Mammary epithelial cell (primary cell): ENCODE measurements at regions of chr2 and their contacts with region 1.

Region 1: DNA sequence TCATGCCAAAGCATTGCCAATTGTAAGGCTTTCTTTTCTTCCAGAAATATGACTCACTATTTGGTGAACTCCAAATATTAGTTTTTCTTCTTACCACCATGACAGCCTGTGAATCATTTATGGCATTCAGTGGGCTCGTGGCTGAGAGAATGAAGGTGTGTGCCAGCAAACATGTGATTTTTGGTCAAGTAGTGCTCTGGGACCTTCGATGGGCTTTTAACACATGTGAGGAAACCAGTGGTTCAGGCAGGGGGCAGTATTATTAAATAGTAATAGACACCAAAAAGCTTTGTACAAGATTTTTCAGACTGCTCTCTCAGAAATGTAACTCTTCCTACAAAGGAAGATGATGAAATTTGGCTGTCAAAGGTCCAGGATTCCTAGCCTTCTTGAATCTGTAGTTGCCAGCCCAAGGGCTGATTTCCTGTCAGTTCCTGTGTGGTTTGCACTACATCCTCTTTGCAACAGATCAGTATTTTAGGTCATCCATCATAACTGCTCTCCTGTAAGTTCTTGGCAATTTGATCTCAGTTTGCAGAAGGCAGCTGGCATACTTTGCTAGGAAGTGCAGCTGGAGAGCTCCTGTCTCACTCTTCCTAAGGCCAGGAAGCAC is 64.3 kb downstream of the BABAM2 start:
- DNase-seq: peak; percentile 92
- H3K4me3 ChIP-seq: peak overlapping the region in 1 of 3 experiments; percentile 4
- H3K27ac ChIP-seq: peak overlapping the region; percentile 84
- H3K4me1 ChIP-seq: peaks cover 66% of the 10 kb centered on the region
- H3K27me3 ChIP-seq: no peaks in the 10 kb centered on the region
- CTCF ChIP-seq: peak; percentile 3 to 33

Region 2: GRCh38 chr2:27754138-27754588 is 200.7 kb before region 1 on chr2:
- CTCF ChIA-PET with region 1: no interaction called
- dilution Hi-C with region 1: no loop called
- in situ Hi-C with region 1: no loop called
- intact Hi-C with region 1: loop called (anchors 2 kb)
- DNase-seq: peak; percentile 76
- H3K4me3 ChIP-seq: no peak overlapping the region
- H3K27ac ChIP-seq: peak overlapping the region; percentile 91
- H3K4me1 ChIP-seq: peaks cover 21% of the 10 kb centered on the region
- H3K27me3 ChIP-seq: no peaks in the 10 kb centered on the region
- CTCF ChIP-seq: peak; percentile 97 to 99

Region 3: DNA sequence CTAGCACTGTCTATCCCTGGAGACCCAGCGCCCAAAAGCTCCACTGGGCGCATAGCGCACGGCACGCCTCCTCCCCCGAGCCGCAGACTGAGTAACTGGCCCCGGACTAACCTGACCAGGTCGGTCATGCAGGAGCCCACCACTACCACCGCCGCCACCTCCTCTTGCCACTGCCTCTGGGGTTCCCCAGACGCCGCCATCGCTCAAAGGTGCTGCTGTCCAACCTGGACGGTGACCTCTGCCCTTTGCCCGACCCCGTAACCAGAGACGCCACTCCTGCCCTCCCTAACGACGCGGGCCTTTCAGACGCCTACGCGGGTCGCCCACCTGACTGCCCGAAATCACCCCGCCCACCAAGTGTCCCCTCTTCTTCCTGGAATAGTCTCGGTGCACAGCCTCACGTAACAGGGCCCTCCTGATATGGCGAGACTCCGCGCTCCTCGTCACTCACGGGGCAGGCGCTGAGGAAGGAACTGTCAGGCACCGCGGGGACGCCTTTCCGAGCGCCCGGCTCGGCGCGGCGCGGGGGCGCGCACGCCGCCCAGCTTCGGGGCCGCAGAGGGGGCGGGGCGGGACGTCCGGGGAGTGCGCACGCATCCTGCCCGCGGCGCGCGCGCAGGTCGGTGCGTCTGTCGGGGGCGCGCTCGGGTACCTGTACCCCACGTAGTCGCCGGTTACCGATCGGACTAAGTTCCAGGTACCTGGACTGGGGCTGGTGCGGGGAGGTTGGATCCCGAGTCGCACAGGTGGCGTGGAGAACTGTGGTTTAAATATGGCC is 64.5 kb before region 1 on chr2 and contains the starts of genes BABAM2 and RBKS:
- CTCF ChIA-PET with region 1: no interaction called
- dilution Hi-C with region 1: no loop called
- in situ Hi-C with region 1: no loop called
- intact Hi-C with region 1: loop called (anchors 2 kb)
- DNase-seq: peak; percentile 84
- H3K4me3 ChIP-seq: peak within 1 kb of the TSS; percentile 60 to 76 (median 74)
- H3K27ac ChIP-seq: peak within 1 kb of the TSS; percentile 90
- H3K4me1 ChIP-seq: peaks cover 21% of the 10 kb centered on the region
- H3K27me3 ChIP-seq: no peaks in the 10 kb centered on the region
- CTCF ChIP-seq: no peak
- total RNA-seq, gene BABAM2: 27.9 to 35.0 TPM
- total RNA-seq, gene RBKS: 1.1 to 3.8 TPM

Region 4: DNA sequence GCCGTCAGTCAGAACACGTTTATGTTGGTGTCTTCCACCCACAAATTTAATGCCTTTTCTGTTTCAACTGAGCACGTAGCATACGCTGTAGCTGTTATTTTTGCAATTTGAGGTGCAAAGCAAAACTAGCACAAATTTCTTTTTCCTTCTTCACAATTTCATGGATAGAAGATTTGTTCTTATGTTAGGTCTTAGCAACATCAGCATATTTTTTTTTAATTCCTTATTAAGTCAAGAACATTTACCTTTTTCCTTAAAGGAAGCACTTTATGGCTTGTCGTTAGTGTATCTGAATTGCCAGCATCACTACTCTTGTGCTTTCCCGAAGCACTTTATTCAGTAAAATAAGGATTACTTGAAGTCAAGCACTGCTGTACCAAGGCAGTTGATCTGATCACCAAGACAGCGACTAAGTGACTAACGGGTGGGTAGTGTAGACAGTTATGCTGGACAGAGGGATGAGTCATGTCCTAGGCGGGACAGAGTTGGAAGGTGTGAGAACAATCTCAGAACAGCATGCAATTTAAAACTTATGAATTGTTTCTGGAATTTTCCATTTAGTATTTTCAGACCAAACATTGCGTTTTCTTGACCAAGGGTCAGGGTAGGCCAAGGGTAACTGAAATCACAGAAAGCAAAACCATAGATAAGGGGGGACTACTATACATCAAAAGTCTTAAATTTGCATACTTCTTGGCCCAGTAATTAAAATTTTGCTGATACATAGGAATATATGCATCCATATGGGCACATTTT is 51.0 kb before region 1 on chr2:
- CTCF ChIA-PET with region 1: no interaction called
- dilution Hi-C with region 1: no loop called
- in situ Hi-C with region 1: no loop called
- intact Hi-C with region 1: no loop called
- DNase-seq: peak; percentile 67
- H3K4me3 ChIP-seq: no peak overlapping the region
- H3K27ac ChIP-seq: no peak overlapping the region
- H3K4me1 ChIP-seq: peaks cover 12% of the 10 kb centered on the region
- H3K27me3 ChIP-seq: no peaks in the 10 kb centered on the region
- CTCF ChIP-seq: no peak

Region 5: GRCh38 chr2:27989141-27989540 is 34.3 kb after region 1 on chr2:
- CTCF ChIA-PET with region 1: interaction called, 3 read pairs
- dilution Hi-C with region 1: no loop called
- in situ Hi-C with region 1: no loop called
- intact Hi-C with region 1: loop called (anchors 2 kb)
- DNase-seq: peak; percentile 97
- H3K4me3 ChIP-seq: no peak overlapping the region
- H3K27ac ChIP-seq: peak overlapping the region; percentile 87
- H3K4me1 ChIP-seq: peaks cover 41% of the 10 kb centered on the region
- H3K27me3 ChIP-seq: no peaks in the 10 kb centered on the region
- CTCF ChIP-seq: peak in 1 of 2 donors; percentile 6

Region 6: DNA sequence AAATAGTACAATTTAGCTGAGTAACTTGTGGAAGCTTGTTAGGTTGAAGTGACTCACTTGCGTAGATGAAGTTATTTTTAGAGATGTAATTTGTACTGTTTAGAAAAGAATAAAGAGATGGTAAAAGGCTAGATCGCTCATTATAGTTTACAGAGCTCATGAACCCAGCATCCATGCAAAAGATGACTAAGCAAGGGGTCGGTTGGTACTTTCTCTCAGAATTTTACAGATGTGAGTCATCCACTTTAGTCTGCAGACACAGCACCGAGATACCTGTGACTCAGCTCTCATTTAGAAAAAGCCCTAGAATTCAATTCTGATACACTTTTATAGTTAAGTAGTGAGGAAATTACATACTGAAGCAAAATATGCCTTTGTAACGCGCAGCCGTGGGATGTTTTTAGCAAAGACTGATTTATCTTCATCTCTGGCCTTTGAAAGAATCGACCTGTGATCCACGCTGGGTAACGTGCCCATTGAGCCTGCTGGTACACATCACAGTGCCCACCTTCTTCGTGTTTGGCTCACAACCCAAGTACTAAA is 321.3 kb after region 1 on chr2:
- CTCF ChIA-PET with region 1: no interaction called
- dilution Hi-C with region 1: no loop called
- in situ Hi-C with region 1: no loop called
- intact Hi-C with region 1: loop called (anchors 1 kb)
- DNase-seq: peak; percentile 98
- H3K4me3 ChIP-seq: no peak overlapping the region
- H3K27ac ChIP-seq: peak overlapping the region; percentile 90
- H3K4me1 ChIP-seq: peaks cover 34% of the 10 kb centered on the region
- H3K27me3 ChIP-seq: no peaks in the 10 kb centered on the region
- CTCF ChIP-seq: no peak

Region 7: GRCh38 chr2:28452534-28453081 is 497.7 kb after region 1 on chr2:
- CTCF ChIA-PET with region 1: no interaction called
- dilution Hi-C with region 1: no loop called
- in situ Hi-C with region 1: no loop called
- intact Hi-C with region 1: loop called (anchors 2 kb)
- DNase-seq: no peak
- H3K4me3 ChIP-seq: no peak overlapping the region
- H3K27ac ChIP-seq: no peak overlapping the region
- H3K4me1 ChIP-seq: peaks cover 52% of the 10 kb centered on the region
- H3K27me3 ChIP-seq: no peaks in the 10 kb centered on the region
- CTCF ChIP-seq: peak; percentile 98 to 99